ENCODE measurements at regions of chr21 and their contacts with region 1.

Region 1: GRCh38 chr21:33479679-33480480 is at the start of gene TMEM50B:
- DNase-seq: peak; percentile 86 to 99 (median 95)
- H3K4me3 ChIP-seq: peak within 1 kb of the TSS; percentile 62 to 100 (median 93)
- H3K27ac ChIP-seq: peak within 1 kb of the TSS; percentile 18 to 98 (median 93)
- H3K27me3 ChIP-seq: no peaks in the 10 kb centered on the region
- CTCF ChIP-seq: peak in 55 of 56 donors; percentile 12 to 66 (median 53)
- total RNA-seq, gene TMEM50B: 34.8 to 77.4 (median 49.5) TPM

Region 2: GRCh38 chr21:33491373-33492102 is 11.7 kb after region 1 on chr21 and contains the start of gene DNAJC28:
- intact Hi-C with region 1: loop called (anchors 1 kb)
- DNase-seq: peak; percentile 90 to 96 (median 92)
- H3K4me3 ChIP-seq: peak within 1 kb of the TSS; percentile 59 to 98 (median 79)
- H3K27ac ChIP-seq: peak within 1 kb of the TSS; percentile 66 to 98 (median 89)
- H3K27me3 ChIP-seq: no peaks in the 10 kb centered on the region
- CTCF ChIP-seq: peak in 16 of 56 donors; percentile 7 to 37 (median 24)
- total RNA-seq, gene DNAJC28: 3.5 to 15.7 (median 8.5) TPM

Region 3: GRCh38 chr21:33588485-33589335 is 108.8 kb after region 1 on chr21 and contains the start of gene DONSON:
- intact Hi-C with region 1: loop called in 1 of 2 experiments (anchors 5 kb)
- DNase-seq: peak; percentile 51 to 94 (median 79)
- H3K4me3 ChIP-seq: peak within 1 kb of the TSS; percentile 58 to 97 (median 85)
- H3K27ac ChIP-seq: peak within 1 kb of the TSS; percentile 4 to 92 (median 82)
- H3K27me3 ChIP-seq: no peaks in the 10 kb centered on the region
- CTCF ChIP-seq: peak in 25 of 56 donors; percentile 4 to 44 (median 29)
- total RNA-seq, gene DONSON: 7.4 to 30.1 (median 16.4) TPM

Region 4: GRCh38 chr21:33668180-33668579 is 188.3 kb after region 1 on chr21:
- intact Hi-C with region 1: no loop called
- DNase-seq: no peak
- H3K4me3 ChIP-seq: no peak overlapping the region
- H3K27ac ChIP-seq: no peak overlapping the region
- H3K27me3 ChIP-seq: no peaks in the 10 kb centered on the region
- CTCF ChIP-seq: no peak

Measured in dorsolateral prefrontal cortex (tissue), 120 donors.